Calu3 (cell line): ENCODE measurements at regions of chr11 and their contacts with region 1.

Region 1: GRCh38 chr11:25981998-25982397 is 349.9 kb upstream of the ANO3 start:
- DNase-seq: peak; percentile 43
- H3K4me3 Mint-ChIP-seq: no peak overlapping the region
- H3K27ac Mint-ChIP-seq: peak overlapping the region; percentile 16
- H3K4me1 Mint-ChIP-seq: peaks cover 33% of the 10 kb centered on the region
- H3K27me3 Mint-ChIP-seq: no peaks in the 10 kb centered on the region
- CTCF ChIP-seq: peak; percentile 53

Region 2: GRCh38 chr11:26035696-26036095 is 53.7 kb after region 1 on chr11:
- CTCF ChIA-PET with region 1: no interaction called
- intact Hi-C with region 1: no loop called
- DNase-seq: no peak
- H3K4me3 Mint-ChIP-seq: no peak overlapping the region
- H3K27ac Mint-ChIP-seq: no peak overlapping the region
- H3K4me1 Mint-ChIP-seq: peaks cover 12% of the 10 kb centered on the region
- H3K27me3 Mint-ChIP-seq: no peaks in the 10 kb centered on the region
- CTCF ChIP-seq: no peak

Region 3: DNA sequence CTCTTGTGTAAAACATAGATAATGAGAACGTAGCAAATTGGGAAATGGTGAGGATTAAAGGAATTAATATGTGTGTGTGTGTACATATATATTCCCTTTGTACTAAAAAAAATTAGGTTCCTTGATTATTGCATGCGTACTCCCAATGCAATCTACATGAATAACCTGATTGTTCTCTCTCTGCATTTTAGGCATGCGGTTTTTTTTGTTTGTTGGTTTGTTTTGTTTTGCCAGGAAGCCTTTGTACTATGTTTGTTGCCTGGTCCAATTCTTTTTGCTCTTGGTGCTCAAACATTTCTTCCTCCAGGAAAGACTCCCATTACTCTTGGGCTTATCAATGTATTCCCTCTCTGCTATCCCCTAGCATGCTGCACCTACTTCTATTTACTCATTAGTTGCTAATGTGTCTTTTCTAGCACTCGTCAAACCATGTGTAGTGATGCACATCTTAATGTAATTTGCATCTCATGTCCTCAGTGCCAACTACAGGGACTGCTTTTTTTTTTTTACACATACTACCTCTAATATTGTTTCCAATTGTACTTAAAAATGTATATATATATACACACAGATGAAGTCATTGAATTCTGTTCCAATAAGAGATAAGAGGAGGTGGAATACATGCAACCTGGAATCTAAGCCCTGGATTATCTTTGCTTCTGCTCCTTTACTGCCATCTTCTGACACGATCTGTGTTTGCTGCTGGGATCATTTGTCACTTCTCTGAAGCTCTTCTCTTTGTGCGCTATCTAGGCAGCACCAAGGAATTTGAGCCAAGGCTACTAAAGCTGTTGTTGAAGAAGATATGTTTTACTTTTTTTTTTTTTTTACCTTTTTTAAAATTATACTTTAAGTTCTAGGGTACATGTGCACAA is 152.7 kb after region 1 on chr11:
- CTCF ChIA-PET with region 1: interaction called, 45 read pairs
- intact Hi-C with region 1: loop called (anchors 1 kb)
- DNase-seq: peak; percentile 23
- H3K4me3 Mint-ChIP-seq: no peak overlapping the region
- H3K27ac Mint-ChIP-seq: no peak overlapping the region
- H3K4me1 Mint-ChIP-seq: peaks cover 8% of the 10 kb centered on the region
- H3K27me3 Mint-ChIP-seq: no peaks in the 10 kb centered on the region
- CTCF ChIP-seq: no peak